ENCODE measurements at regions of chr2 and their contacts with region 1.

Region 1: GRCh38 chr2:177489719-177490301 is 97.2 kb downstream of the AGPS start:
- DNase-seq: peak; percentile 58
- H3K4me3 ChIP-seq: no peak overlapping the region
- H3K27ac ChIP-seq: 0 out of 4 replicates have a peak overlapping the region, but pooled peaks of 1 of the 2 experiments have one; percentile 14
- H3K4me1 ChIP-seq: no peaks in the 10 kb centered on the region; a peak in 1 of 4 replicates
- H3K27me3 ChIP-seq: no peaks in the 10 kb centered on the region
- CTCF ChIP-seq: peak; percentile 75
- EP300 ChIP-seq: no peak
- RAD21 ChIP-seq: peak; percentile 90

Region 2: DNA sequence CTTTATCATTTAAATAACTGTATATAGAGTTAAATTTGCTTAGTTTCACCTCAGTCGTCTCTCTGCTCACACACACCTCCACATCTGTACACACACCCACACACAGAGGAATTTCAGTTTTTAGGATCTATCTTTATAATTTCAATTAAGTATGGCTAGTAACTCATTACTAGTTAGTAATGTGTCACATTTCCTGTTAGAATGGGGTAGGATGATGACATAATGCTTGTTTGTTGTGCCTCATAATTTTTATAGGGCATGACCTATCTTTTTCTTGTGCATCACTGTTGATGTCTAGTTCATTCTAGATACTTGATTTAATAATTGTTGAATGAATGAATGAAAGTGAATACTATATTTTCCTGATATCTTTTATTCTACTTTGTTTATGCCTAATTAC is 11.4 kb after region 1 on chr2:
- CTCF ChIA-PET with region 1: interaction called, 17 read pairs
- POLR2A ChIA-PET with region 1: no interaction called
- DNase-seq: no peak
- H3K4me3 ChIP-seq: no peak overlapping the region
- H3K27ac ChIP-seq: no peak overlapping the region
- H3K4me1 ChIP-seq: no peaks in the 10 kb centered on the region; a peak in 1 of 4 replicates
- H3K27me3 ChIP-seq: no peaks in the 10 kb centered on the region
- CTCF ChIP-seq: no peak
- EP300 ChIP-seq: no peak
- RAD21 ChIP-seq: no peak

Region 3: DNA sequence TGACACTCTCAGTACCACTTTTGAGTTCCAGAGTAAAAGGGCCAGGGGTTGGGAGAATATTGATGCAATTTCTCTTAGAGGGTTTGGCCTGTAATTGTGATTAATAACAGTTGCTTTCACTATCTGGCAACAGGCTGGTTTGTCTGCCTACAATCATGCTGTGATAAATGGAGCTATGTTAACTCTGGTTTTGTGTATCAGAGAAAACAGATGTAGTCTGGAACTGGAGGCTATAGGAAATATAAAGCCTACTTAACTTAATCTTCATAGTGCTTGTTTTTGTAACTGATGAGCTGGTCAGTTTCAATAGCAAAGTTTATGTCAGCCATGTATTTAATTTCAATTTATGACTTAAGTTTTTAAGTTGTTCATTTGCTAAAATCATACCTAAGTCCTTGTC is 40.8 kb after region 1 on chr2:
- CTCF ChIA-PET with region 1: interaction called, 18 read pairs
- POLR2A ChIA-PET with region 1: no interaction called
- DNase-seq: peak; percentile 55
- H3K4me3 ChIP-seq: no peak overlapping the region
- H3K27ac ChIP-seq: peak overlapping the region in 1 of 2 experiments; percentile 91; a peak in 2 of 4 replicates
- H3K4me1 ChIP-seq: peaks cover 0 to 14% of the 10 kb centered on the region in 2 experiments; a peak in 2 of 4 replicates
- H3K27me3 ChIP-seq: no peaks in the 10 kb centered on the region
- CTCF ChIP-seq: no peak
- EP300 ChIP-seq: peak; percentile 12 to 99; a peak in 3 of 4 replicates
- RAD21 ChIP-seq: peak; percentile 30; the same call in 1 of the 2 replicates

Region 4: DNA sequence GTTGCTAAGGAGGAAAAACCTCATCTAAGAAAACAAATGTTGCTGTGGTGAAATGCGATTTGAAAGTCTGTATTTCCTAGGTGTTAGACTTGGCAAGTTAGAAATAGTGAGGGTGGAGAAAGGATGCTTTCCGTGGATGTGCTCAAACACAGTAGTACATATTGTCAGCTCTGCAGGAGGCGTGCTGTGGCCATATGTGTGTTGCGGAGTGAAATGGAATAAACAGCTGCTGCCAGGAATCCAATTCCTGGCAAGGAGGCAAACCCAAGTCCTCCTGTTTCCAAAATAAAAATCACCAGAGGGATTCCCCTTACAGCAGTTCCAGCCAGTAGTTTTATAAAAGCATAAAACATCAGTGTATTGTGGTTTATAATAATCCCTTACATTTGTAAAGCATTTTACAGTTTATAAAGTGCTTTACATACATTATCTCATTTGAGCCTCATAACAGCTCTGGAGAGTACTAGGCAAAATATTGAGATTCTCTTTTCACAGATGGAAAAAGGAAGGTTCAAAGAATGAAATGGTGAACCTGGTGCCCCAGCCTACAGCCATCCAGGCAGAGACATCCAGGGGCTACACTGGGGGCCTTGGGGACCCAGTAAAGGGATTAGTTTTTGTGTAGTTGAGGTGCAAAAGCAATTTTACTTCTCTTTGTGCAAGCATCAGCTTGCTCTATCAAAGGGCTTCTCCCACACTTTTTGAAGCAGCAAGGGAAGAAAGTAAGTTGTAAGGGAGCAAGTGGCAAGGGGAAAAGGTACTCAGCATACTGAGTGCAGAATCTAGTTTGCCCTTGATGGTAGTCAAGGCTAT is 108.7 kb after region 1 on chr2:
- CTCF ChIA-PET with region 1: interaction called, 75 read pairs
- POLR2A ChIA-PET with region 1: no interaction called
- DNase-seq: peak; percentile 35
- H3K4me3 ChIP-seq: no peak overlapping the region
- H3K27ac ChIP-seq: peak overlapping the region in 1 of 2 experiments; percentile 43; a peak in 2 of 4 replicates
- H3K4me1 ChIP-seq: peaks cover 0 to 21% of the 10 kb centered on the region in 2 experiments; a peak in 3 of 4 replicates
- H3K27me3 ChIP-seq: no peaks in the 10 kb centered on the region; the same call in 1 of the 2 replicates
- CTCF ChIP-seq: no peak
- EP300 ChIP-seq: no peak
- RAD21 ChIP-seq: no peak

Region 5: DNA sequence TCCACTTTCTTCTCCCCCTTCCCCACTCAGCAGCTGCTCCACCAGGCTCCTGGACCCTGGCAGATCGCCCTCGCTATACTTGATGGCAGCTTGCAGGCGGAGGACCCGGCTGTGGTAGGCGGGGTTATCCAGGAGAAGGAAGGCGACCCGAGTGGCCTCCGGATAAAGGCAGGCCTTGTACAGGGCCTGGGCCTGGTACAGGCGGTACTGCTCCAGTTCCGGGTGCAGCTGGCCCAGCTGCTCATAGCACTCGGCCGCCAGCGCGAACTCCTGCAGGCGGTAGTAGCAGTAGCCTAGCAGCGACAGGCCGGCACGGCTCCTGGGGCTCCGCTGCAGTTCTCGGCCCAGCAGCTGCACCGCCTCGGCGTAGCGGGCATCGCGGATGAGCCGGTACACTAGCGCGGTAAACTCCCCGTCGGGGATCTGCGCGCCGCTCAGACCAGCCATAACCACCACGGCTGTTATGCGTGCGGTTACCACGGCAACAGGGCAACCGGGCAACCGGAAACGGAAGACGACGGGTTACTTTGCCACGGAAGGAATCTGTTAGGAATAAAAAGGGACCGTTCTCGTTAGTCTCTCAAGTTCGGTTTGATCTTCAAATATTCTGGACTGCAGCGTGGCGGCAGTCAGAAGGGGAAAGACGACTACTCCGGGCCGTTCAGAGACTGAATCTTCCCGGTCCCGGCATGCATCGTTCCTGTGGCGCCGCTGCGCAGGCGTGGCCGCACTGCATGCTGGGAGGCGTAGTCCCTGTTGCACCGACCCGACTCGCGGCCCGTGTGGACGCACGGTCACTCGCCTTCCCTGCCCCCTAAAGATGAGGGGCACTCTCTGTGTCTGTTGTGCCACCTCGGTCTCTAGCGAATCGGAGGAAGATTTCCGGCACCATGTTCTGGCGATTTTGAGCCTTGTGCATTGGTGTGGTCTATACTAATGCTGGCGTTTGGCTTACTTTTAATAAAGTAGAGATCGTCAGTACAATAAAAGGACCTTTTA is 128.7 kb after region 1 on chr2:
- CTCF ChIA-PET with region 1: interaction called, 21 read pairs
- POLR2A ChIA-PET with region 1: no interaction called
- DNase-seq: peak; percentile 92
- H3K4me3 ChIP-seq: peak overlapping the region; percentile 64 to 92
- H3K27ac ChIP-seq: peak overlapping the region; percentile 83 to 99
- H3K4me1 ChIP-seq: peaks cover 0 to 10% of the 10 kb centered on the region in 2 experiments; a peak in 2 of 4 replicates
- H3K27me3 ChIP-seq: no peaks in the 10 kb centered on the region
- CTCF ChIP-seq: no peak
- EP300 ChIP-seq: 0 out of 4 replicates have a peak, but pooled peaks of 1 of the 2 experiments have one; percentile 4
- RAD21 ChIP-seq: no peak

Region 6: GRCh38 chr2:177748360-177748759 is 258.6 kb after region 1 on chr2:
- CTCF ChIA-PET with region 1: interaction called, 18 read pairs
- POLR2A ChIA-PET with region 1: no interaction called
- DNase-seq: no peak
- H3K4me3 ChIP-seq: no peak overlapping the region
- H3K27ac ChIP-seq: no peak overlapping the region
- H3K4me1 ChIP-seq: peaks cover 0 to 2% of the 10 kb centered on the region in 2 experiments; a peak in 1 of 4 replicates
- H3K27me3 ChIP-seq: no peaks in the 10 kb centered on the region
- CTCF ChIP-seq: no peak
- EP300 ChIP-seq: no peak
- RAD21 ChIP-seq: no peak